ENCODE measurements at regions of chr3 and their contacts with region 1.

Region 1: GRCh38 chr3:133573054-133573628 is 345 bp upstream of the CDV3 start:
- DNase-seq: peak; percentile 100
- H3K4me3 ChIP-seq: peak overlapping the region; percentile 96
- H3K4me3 Mint-ChIP-seq: peak overlapping the region; percentile 81
- H3K27ac Mint-ChIP-seq: peak overlapping the region; percentile 96
- H3K4me1 ChIP-seq: peaks cover 58% of the 10 kb centered on the region
- H3K4me1 Mint-ChIP-seq: peaks cover 33% of the 10 kb centered on the region
- H3K27me3 ChIP-seq: no peaks in the 10 kb centered on the region
- H3K27me3 Mint-ChIP-seq: no peaks in the 10 kb centered on the region
- CTCF ChIP-seq: peak in 1 of 2 experiments; percentile 27

Region 2: DNA sequence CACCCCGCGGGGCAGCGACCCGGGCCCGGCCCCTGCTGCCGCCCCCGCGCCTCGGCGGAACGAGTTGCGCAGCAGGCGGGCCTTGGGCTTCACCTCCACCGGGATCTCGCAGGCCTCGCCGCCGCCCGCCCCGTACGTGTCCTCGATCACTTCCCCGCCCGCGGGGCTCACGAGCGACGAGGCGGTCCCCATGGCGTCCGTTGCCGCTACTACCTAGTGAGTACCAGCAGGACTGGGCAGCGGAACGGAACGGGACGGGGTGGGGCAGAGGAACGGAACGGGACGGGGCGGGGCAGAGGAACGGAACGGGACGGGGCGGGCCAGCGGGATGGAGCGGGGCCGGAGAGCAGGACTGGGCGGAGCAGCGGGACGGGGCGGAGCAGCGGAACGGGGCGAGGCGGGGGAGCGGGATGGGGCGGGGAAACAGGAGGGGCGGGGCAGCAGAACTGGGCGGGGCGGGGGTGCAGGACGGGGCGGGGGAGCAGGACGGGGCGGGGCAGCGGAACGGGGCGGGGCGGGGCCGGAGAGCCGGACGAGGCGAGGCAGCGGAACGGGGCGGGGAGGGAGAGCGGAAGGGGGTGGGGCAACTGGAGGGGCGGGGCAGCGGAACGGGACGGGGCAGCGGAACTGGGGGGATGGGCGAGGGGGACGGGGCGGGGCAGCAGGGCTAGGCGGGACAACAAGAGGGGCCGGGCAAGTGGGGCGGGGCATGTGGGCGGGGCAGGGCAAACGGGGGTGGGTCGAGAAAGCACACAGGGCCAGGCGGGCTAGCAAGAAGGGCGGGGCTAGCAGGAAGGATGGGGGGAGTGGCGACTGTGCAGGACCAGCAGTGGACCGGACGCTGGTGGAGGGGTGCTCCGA is 850.7 kb before region 1 on chr3 and contains the start of gene NPHP3:
- CTCF ChIA-PET with region 1: interaction called, 3 read pairs
- POLR2A ChIA-PET with region 1: interaction called, 3 read pairs
- intact Hi-C with region 1: loop called (anchors 10 kb)
- DNase-seq: peak; percentile 92 to 98
- H3K4me3 ChIP-seq: peak within 1 kb of the TSS; percentile 97
- H3K4me3 Mint-ChIP-seq: peak within 1 kb of the TSS; percentile 87
- H3K27ac Mint-ChIP-seq: peak within 1 kb of the TSS; percentile 88
- H3K4me1 ChIP-seq: peaks cover 9% of the 10 kb centered on the region
- H3K4me1 Mint-ChIP-seq: peaks cover 16% of the 10 kb centered on the region
- H3K27me3 ChIP-seq: no peaks in the 10 kb centered on the region
- H3K27me3 Mint-ChIP-seq: no peaks in the 10 kb centered on the region
- CTCF ChIP-seq: no peak
- total RNA-seq, gene NPHP3: 16.0 and 16.9 TPM in 2 replicates

Region 3: GRCh38 chr3:133208186-133208585 is 365.0 kb before region 1 on chr3:
- CTCF ChIA-PET with region 1: no interaction called
- POLR2A ChIA-PET with region 1: no interaction called
- intact Hi-C with region 1: no loop called
- DNase-seq: no peak
- H3K4me3 ChIP-seq: no peak overlapping the region
- H3K4me3 Mint-ChIP-seq: no peak overlapping the region
- H3K27ac Mint-ChIP-seq: no peak overlapping the region
- H3K4me1 ChIP-seq: no peaks in the 10 kb centered on the region
- H3K4me1 Mint-ChIP-seq: no peaks in the 10 kb centered on the region
- H3K27me3 ChIP-seq: no peaks in the 10 kb centered on the region
- H3K27me3 Mint-ChIP-seq: peaks cover 20% of the 10 kb centered on the region
- CTCF ChIP-seq: no peak

Region 4: GRCh38 chr3:133452641-133453319 is 120.4 kb before region 1 on chr3:
- CTCF ChIA-PET with region 1: interaction called, 5 read pairs
- POLR2A ChIA-PET with region 1: interaction called, 11 read pairs
- intact Hi-C with region 1: loop called (anchors 2 kb)
- DNase-seq: peak; percentile 80 to 82
- H3K4me3 ChIP-seq: no peak overlapping the region
- H3K4me3 Mint-ChIP-seq: peak overlapping the region; percentile 59
- H3K27ac Mint-ChIP-seq: peak overlapping the region; percentile 72
- H3K4me1 ChIP-seq: peaks cover 60% of the 10 kb centered on the region
- H3K4me1 Mint-ChIP-seq: peaks cover 48% of the 10 kb centered on the region
- H3K27me3 ChIP-seq: no peaks in the 10 kb centered on the region
- H3K27me3 Mint-ChIP-seq: no peaks in the 10 kb centered on the region
- CTCF ChIP-seq: no peak

Region 5: GRCh38 chr3:133487920-133488540 is 85.1 kb before region 1 on chr3:
- CTCF ChIA-PET with region 1: interaction called, 12 read pairs
- POLR2A ChIA-PET with region 1: interaction called, 6 read pairs
- intact Hi-C with region 1: no loop called
- DNase-seq: no peak
- H3K4me3 ChIP-seq: no peak overlapping the region
- H3K4me3 Mint-ChIP-seq: no peak overlapping the region
- H3K27ac Mint-ChIP-seq: no peak overlapping the region
- H3K4me1 ChIP-seq: 0 out of 2 replicates have a peak, but pooled peaks cover 3% of the 10 kb centered on the region
- H3K4me1 Mint-ChIP-seq: peaks cover 9% of the 10 kb centered on the region
- H3K27me3 ChIP-seq: no peaks in the 10 kb centered on the region
- H3K27me3 Mint-ChIP-seq: no peaks in the 10 kb centered on the region
- CTCF ChIP-seq: no peak

Region 6: GRCh38 chr3:133547432-133548041 is 25.6 kb before region 1 on chr3:
- CTCF ChIA-PET with region 1: interaction called, 17 read pairs
- POLR2A ChIA-PET with region 1: interaction called, 31 read pairs
- intact Hi-C with region 1: loop called (anchors 1 kb)
- DNase-seq: peak; percentile 83 to 88
- H3K4me3 ChIP-seq: no peak overlapping the region
- H3K4me3 Mint-ChIP-seq: peak overlapping the region; percentile 67
- H3K27ac Mint-ChIP-seq: peak overlapping the region; percentile 88
- H3K4me1 ChIP-seq: peaks cover 49% of the 10 kb centered on the region
- H3K4me1 Mint-ChIP-seq: peaks cover 47% of the 10 kb centered on the region
- H3K27me3 ChIP-seq: no peaks in the 10 kb centered on the region
- H3K27me3 Mint-ChIP-seq: no peaks in the 10 kb centered on the region
- CTCF ChIP-seq: no peak

Measured in Caco-2 (cell line).